Caco-2 (cell line): ENCODE measurements at regions of chr12 and their contacts with region 1.

Region 1: DNA sequence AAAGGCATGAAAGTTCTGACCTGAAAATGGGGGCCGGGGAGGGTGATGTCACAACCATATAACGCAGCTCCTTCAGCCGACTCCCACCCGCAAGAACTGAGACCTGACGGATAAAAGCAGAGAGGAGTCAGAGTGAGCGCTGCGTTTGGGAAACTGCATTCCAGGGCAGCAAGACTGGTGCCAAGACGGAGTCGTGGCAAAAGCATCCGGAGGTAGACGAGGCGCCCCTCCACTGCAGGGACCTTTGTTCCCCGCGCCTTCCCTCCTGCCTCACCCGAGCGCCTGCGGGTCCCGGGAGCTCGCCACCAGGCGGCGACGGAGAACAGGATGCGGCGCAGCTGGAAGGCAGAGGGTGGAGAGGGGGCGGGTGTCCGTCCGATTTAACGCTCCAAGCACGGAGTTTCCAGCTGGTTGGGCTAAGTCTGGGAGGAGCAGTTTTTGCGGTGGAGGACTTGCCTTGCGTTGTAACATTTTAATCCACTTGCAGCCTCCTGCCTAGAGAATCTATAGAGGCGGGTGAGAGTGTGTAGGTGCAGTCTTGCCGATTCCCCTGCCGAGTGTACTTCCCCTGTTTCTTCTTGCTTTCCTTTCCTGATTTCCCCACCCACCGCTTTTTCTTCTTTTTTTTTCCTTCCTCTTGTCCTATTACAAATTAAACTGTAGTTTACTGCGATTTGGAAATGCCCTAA is 1.2 kb upstream of the CPNE8 start:
- DNase-seq: peak; percentile 88 to 94
- H3K4me3 ChIP-seq: peak overlapping the region; percentile 94
- H3K4me3 Mint-ChIP-seq: peak overlapping the region; percentile 98
- H3K27ac Mint-ChIP-seq: peak overlapping the region; percentile 93
- H3K4me1 ChIP-seq: 0 out of 2 replicates have a peak, but pooled peaks cover 4% of the 10 kb centered on the region
- H3K4me1 Mint-ChIP-seq: peaks cover 13% of the 10 kb centered on the region
- H3K27me3 ChIP-seq: no peaks in the 10 kb centered on the region
- H3K27me3 Mint-ChIP-seq: no peaks in the 10 kb centered on the region
- CTCF ChIP-seq: peak; percentile 82 to 98

Region 2: DNA sequence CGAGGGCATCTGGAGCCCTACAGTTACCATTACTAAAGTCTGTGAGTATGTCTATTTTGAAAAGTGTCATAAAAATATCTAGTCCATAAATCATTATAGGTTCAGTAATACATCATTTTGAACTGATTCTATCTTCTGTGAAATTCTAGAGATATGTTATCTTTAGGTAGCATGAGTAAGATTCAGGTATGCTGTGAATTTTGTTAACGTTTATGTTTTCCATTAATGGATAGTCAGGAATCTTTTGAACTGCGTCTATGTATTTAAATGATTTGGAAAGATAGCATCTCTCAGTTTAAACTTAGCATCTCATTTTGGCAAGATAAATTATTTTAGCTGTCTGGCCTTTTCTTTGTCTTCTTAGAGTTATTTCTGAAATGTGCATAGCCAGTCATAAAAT is 581.7 kb before region 1 on chr12:
- CTCF ChIA-PET with region 1: no interaction called
- POLR2A ChIA-PET with region 1: no interaction called
- intact Hi-C with region 1: loop called (anchors 2 kb)
- DNase-seq: peak in 1 of 2 experiments; percentile 13
- H3K4me3 ChIP-seq: no peak overlapping the region
- H3K4me3 Mint-ChIP-seq: no peak overlapping the region
- H3K27ac Mint-ChIP-seq: no peak overlapping the region
- H3K4me1 ChIP-seq: peaks cover 10% of the 10 kb centered on the region; the same call in 1 of the 2 replicates
- H3K4me1 Mint-ChIP-seq: peaks cover 9% of the 10 kb centered on the region
- H3K27me3 ChIP-seq: no peaks in the 10 kb centered on the region
- H3K27me3 Mint-ChIP-seq: no peaks in the 10 kb centered on the region
- CTCF ChIP-seq: no peak

Region 3: GRCh38 chr12:38711055-38711454 is 195.6 kb before region 1 on chr12:
- CTCF ChIA-PET with region 1: interaction called, 3 read pairs
- POLR2A ChIA-PET with region 1: interaction called, 8 read pairs
- intact Hi-C with region 1: loop called (anchors 1 kb)
- DNase-seq: peak in 1 of 2 experiments; percentile 70
- H3K4me3 ChIP-seq: no peak overlapping the region
- H3K4me3 Mint-ChIP-seq: no peak overlapping the region
- H3K27ac Mint-ChIP-seq: peak overlapping the region; percentile 92
- H3K4me1 ChIP-seq: peaks cover 6% of the 10 kb centered on the region; the same call in 1 of the 2 replicates
- H3K4me1 Mint-ChIP-seq: peaks cover 13% of the 10 kb centered on the region
- H3K27me3 ChIP-seq: no peaks in the 10 kb centered on the region
- H3K27me3 Mint-ChIP-seq: no peaks in the 10 kb centered on the region
- CTCF ChIP-seq: no peak

Region 4: DNA sequence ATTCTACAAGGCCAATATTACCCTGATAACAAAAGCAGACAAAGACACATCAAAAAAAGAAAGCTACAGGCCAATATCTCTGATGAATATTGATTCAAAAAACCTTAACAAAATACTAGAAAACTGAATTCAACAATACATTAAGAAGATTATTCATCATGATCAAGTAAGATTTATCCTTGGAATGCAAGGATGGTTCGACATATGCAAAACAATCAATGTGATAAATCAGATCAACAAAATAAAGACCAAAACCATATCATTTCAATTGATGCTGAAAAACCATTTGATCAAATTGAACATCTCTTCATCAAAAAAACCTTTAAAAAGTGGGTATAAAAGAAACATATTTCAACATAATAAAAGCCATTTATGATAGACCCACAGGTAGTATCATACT is 118.5 kb before region 1 on chr12:
- CTCF ChIA-PET with region 1: no interaction called
- POLR2A ChIA-PET with region 1: no interaction called
- intact Hi-C with region 1: loop called (anchors 5 kb)
- DNase-seq: no peak
- H3K4me3 ChIP-seq: no peak overlapping the region
- H3K4me3 Mint-ChIP-seq: no peak overlapping the region
- H3K27ac Mint-ChIP-seq: no peak overlapping the region
- H3K4me1 ChIP-seq: no peaks in the 10 kb centered on the region
- H3K4me1 Mint-ChIP-seq: no peaks in the 10 kb centered on the region
- H3K27me3 ChIP-seq: no peaks in the 10 kb centered on the region
- H3K27me3 Mint-ChIP-seq: no peaks in the 10 kb centered on the region
- CTCF ChIP-seq: no peak

Region 5: GRCh38 chr12:38892090-38892786 is 14.4 kb before region 1 on chr12:
- CTCF ChIA-PET with region 1: interaction called, 23 read pairs
- POLR2A ChIA-PET with region 1: interaction called, 4 read pairs
- intact Hi-C with region 1: loop called (anchors 1 kb)
- DNase-seq: peak; percentile 89 to 94
- H3K4me3 ChIP-seq: no peak overlapping the region
- H3K4me3 Mint-ChIP-seq: peak overlapping the region; percentile 74
- H3K27ac Mint-ChIP-seq: peak overlapping the region; percentile 97
- H3K4me1 ChIP-seq: peaks cover 40% of the 10 kb centered on the region
- H3K4me1 Mint-ChIP-seq: peaks cover 41% of the 10 kb centered on the region
- H3K27me3 ChIP-seq: no peaks in the 10 kb centered on the region
- H3K27me3 Mint-ChIP-seq: no peaks in the 10 kb centered on the region
- CTCF ChIP-seq: no peak

Region 6: GRCh38 chr12:39103552-39104165 is 197.0 kb after region 1 on chr12:
- CTCF ChIA-PET with region 1: interaction called, 3 read pairs
- POLR2A ChIA-PET with region 1: no interaction called
- intact Hi-C with region 1: loop called (anchors 1 kb)
- DNase-seq: peak in 1 of 2 experiments; percentile 68
- H3K4me3 ChIP-seq: no peak overlapping the region
- H3K4me3 Mint-ChIP-seq: no peak overlapping the region
- H3K27ac Mint-ChIP-seq: no peak overlapping the region
- H3K4me1 ChIP-seq: no peaks in the 10 kb centered on the region
- H3K4me1 Mint-ChIP-seq: no peaks in the 10 kb centered on the region
- H3K27me3 ChIP-seq: no peaks in the 10 kb centered on the region
- H3K27me3 Mint-ChIP-seq: peaks cover 2% of the 10 kb centered on the region
- CTCF ChIP-seq: peak; percentile 59 to 78

Region 7: GRCh38 chr12:39272871-39273770 is 366.5 kb after region 1 on chr12:
- CTCF ChIA-PET with region 1: interaction called, 23 read pairs
- POLR2A ChIA-PET with region 1: no interaction called
- intact Hi-C with region 1: no loop called
- DNase-seq: peak in 1 of 2 experiments; percentile 69
- H3K4me3 ChIP-seq: no peak overlapping the region
- H3K4me3 Mint-ChIP-seq: no peak overlapping the region
- H3K27ac Mint-ChIP-seq: no peak overlapping the region
- H3K4me1 ChIP-seq: no peaks in the 10 kb centered on the region; the same call in 1 of the 2 replicates
- H3K4me1 Mint-ChIP-seq: peaks cover 9% of the 10 kb centered on the region
- H3K27me3 ChIP-seq: no peaks in the 10 kb centered on the region
- H3K27me3 Mint-ChIP-seq: no peaks in the 10 kb centered on the region
- CTCF ChIP-seq: peak; percentile 70 to 78